Left ventricle myocardium inferior (tissue), 1 donor: ENCODE measurements at regions of chr21 and their contacts with region 1.

Region 1: GRCh38 chr21:28745131-28746016 is 247.3 kb downstream of the LTN1 start:
- DNase-seq: peak; percentile 66
- H3K4me3 ChIP-seq: peak overlapping the region; percentile 63
- H3K27ac ChIP-seq: peak overlapping the region; percentile 85
- H3K4me1 ChIP-seq: peaks cover 41% of the 10 kb centered on the region
- H3K27me3 ChIP-seq: no peaks in the 10 kb centered on the region
- CTCF ChIP-seq: peak; percentile 94

Region 2: DNA sequence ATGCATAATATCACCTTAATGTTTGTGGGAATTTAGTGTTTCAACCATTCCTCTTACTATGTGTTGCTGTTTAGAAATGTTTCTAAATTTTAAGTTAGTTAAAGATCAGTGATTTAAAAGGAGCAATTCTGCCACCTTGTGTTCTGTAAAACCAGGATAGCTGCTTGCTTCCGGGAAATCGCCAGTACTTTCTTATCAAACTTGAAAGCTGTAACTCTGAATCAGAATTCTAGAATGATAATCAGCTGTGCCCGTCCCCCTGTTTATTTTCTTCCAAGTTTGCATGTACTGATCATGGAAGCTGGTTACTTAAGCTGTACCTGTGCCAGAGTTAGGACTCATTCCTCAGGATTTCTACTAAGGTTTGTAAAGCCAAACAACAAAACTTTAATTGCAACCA is 409.1 kb before region 1 on chr21:
- intact Hi-C with region 1: loop called (anchors 10 kb)
- DNase-seq: no peak
- H3K4me3 ChIP-seq: no peak overlapping the region
- H3K27ac ChIP-seq: peak overlapping the region; percentile 2
- H3K4me1 ChIP-seq: peaks cover 40% of the 10 kb centered on the region
- H3K27me3 ChIP-seq: no peaks in the 10 kb centered on the region
- CTCF ChIP-seq: peak; percentile 69

Region 3: DNA sequence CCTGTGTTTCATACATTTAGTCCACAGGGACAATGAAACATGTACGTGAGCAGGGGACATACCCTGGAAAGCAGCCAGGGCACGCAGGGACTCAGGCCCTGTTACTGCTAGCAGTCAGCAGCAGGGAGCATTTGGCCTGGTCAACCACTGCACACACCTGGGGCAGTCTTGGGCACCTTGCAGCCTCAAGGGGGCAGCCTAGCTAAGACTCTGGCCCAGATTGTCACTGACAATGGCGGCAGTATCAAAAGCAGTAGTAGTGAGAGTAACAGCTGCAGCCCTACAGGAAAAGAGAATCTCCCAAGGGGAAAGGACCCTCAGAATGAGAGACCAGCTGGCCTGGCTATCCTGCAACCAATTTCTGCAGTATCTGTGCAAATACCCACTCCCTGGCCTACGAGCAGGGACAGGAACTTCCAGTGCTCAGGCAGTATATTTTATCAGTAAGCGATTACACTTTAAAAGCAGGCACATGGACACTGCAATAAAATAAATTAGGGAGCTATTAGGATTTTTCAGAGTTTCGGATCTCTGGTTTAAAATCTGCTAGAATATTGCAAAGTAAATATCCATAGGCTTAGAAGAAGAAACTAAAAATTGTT is 228.3 kb before region 1 on chr21:
- intact Hi-C with region 1: loop called (anchors 5 kb)
- DNase-seq: peak; percentile 64
- H3K4me3 ChIP-seq: peak overlapping the region; percentile 31
- H3K27ac ChIP-seq: peak overlapping the region; percentile 57
- H3K4me1 ChIP-seq: peaks cover 45% of the 10 kb centered on the region
- H3K27me3 ChIP-seq: no peaks in the 10 kb centered on the region
- CTCF ChIP-seq: peak; percentile 84